PC-3 (cell line): ENCODE measurements at regions of chr4 and their contacts with region 1.

Region 1: GRCh38 chr4:60296386-60296785 is 903.7 kb upstream of the ADGRL3 start:
- DNase-seq: no peak
- ATAC-seq: peak; percentile 29; the same call in 1 of the 2 replicates
- H3K4me3 ChIP-seq: no peak overlapping the region
- H3K27ac ChIP-seq: no peak overlapping the region
- H3K4me1 ChIP-seq: no peaks in the 10 kb centered on the region
- H3K27me3 ChIP-seq: no peaks in the 10 kb centered on the region
- CTCF ChIP-seq: no peak

Region 2: GRCh38 chr4:62015043-62015739 is 1718.8 kb after region 1 on chr4:
- CTCF ChIA-PET with region 1: no interaction called
- POLR2A ChIA-PET with region 1: no interaction called
- intact Hi-C with region 1: loop called (anchors 10 kb)
- DNase-seq: peak; percentile 53
- ATAC-seq: peak; percentile 45
- H3K4me3 ChIP-seq: no peak overlapping the region
- H3K27ac ChIP-seq: no peak overlapping the region
- H3K4me1 ChIP-seq: peaks cover 4% of the 10 kb centered on the region; the same call in 1 of the 2 replicates
- H3K27me3 ChIP-seq: no peaks in the 10 kb centered on the region
- CTCF ChIP-seq: no peak